OCI-LY7 (cell line): ENCODE measurements at regions of chr3 and their contacts with region 1.

Region 1: GRCh38 chr3:177179281-177180067 is 17.8 kb downstream of the TBL1XR1 start:
- DNase-seq: peak; percentile 51
- H3K4me3 ChIP-seq: no peak overlapping the region
- H3K27ac ChIP-seq: peak overlapping the region; percentile 1
- H3K4me1 ChIP-seq: peaks cover 46% of the 10 kb centered on the region
- CTCF ChIP-seq: no peak

Region 2: GRCh38 chr3:176939022-176939817 is 240.3 kb before region 1 on chr3:
- CTCF ChIA-PET with region 1: no interaction called
- POLR2A ChIA-PET with region 1: no interaction called
- intact Hi-C with region 1: no loop called
- DNase-seq: peak; percentile 79
- H3K4me3 ChIP-seq: no peak overlapping the region
- H3K27ac ChIP-seq: no peak overlapping the region
- H3K4me1 ChIP-seq: no peaks in the 10 kb centered on the region
- CTCF ChIP-seq: peak; percentile 92

Region 3: DNA sequence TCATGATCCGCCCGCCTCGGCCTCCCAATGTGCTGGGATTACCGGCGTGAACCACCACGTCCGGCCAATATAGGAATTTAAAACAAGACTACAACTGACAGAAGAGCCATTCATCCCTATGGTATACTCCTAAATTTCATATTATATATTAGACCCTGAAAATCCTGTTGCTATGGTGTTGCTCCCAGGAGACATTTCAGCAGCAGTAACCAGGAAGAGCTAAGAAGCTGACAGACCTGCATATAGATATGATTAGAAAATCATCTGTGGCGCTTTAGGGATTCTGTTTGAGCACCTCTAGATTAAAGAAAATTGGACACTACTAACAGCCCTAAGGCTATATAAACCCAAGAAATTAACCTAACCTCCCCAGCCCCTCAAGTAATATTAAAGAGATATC is 21.0 kb before region 1 on chr3:
- CTCF ChIA-PET with region 1: no interaction called
- POLR2A ChIA-PET with region 1: interaction called, 13 read pairs
- intact Hi-C with region 1: no loop called
- DNase-seq: no peak
- H3K4me3 ChIP-seq: no peak overlapping the region
- H3K27ac ChIP-seq: no peak overlapping the region
- H3K4me1 ChIP-seq: no peaks in the 10 kb centered on the region
- CTCF ChIP-seq: no peak

Region 4: GRCh38 chr3:177201706-177202397 is 22.4 kb after region 1 on chr3:
- CTCF ChIA-PET with region 1: no interaction called
- POLR2A ChIA-PET with region 1: no interaction called
- intact Hi-C with region 1: no loop called
- DNase-seq: peak; percentile 56
- H3K4me3 ChIP-seq: peak overlapping the region; percentile 24
- H3K27ac ChIP-seq: no peak overlapping the region
- H3K4me1 ChIP-seq: peaks cover 40% of the 10 kb centered on the region
- CTCF ChIP-seq: no peak